WTC11 (cell line): ENCODE measurements at regions of chr10 and their contacts with region 1.

Region 1: GRCh38 chr10:48523820-48524758 is 80.8 kb downstream of the ARHGAP22 start:
- DNase-seq: peak; percentile 73
- ATAC-seq: peak; percentile 61
- H3K4me3 Mint-ChIP-seq: peak overlapping the region; percentile 56
- H3K27ac Mint-ChIP-seq: no peak overlapping the region
- H3K4me1 Mint-ChIP-seq: peaks cover 37% of the 10 kb centered on the region
- H3K27me3 Mint-ChIP-seq: peaks cover 11% of the 10 kb centered on the region
- CTCF ChIP-seq: peak; percentile 90

Region 2: GRCh38 chr10:48533951-48534720 is 10.0 kb after region 1 on chr10:
- CTCF ChIA-PET with region 1: interaction called, 35 read pairs
- POLR2A ChIA-PET with region 1: no interaction called
- DNase-seq: peak; percentile 46
- ATAC-seq: peak; percentile 38
- H3K4me3 Mint-ChIP-seq: no peak overlapping the region
- H3K27ac Mint-ChIP-seq: peak overlapping the region; percentile 80
- H3K4me1 Mint-ChIP-seq: peaks cover 54% of the 10 kb centered on the region
- H3K27me3 Mint-ChIP-seq: no peaks in the 10 kb centered on the region; the same call in 1 of the 2 replicates
- CTCF ChIP-seq: no peak